ENCODE measurements at regions of chr5 and their contacts with region 1.

Region 1: GRCh38 chr5:112216140-112216539 is 202.9 kb downstream of the EPB41L4A start:
- DNase-seq: no peak
- ATAC-seq: no peak
- H3K4me3 ChIP-seq: no peak overlapping the region
- H3K27ac ChIP-seq: no peak overlapping the region
- H3K4me1 ChIP-seq: no peaks in the 10 kb centered on the region
- H3K27me3 ChIP-seq: no peaks in the 10 kb centered on the region; the same call in 1 of the 2 replicates
- CTCF ChIP-seq: no peak

Region 2: DNA sequence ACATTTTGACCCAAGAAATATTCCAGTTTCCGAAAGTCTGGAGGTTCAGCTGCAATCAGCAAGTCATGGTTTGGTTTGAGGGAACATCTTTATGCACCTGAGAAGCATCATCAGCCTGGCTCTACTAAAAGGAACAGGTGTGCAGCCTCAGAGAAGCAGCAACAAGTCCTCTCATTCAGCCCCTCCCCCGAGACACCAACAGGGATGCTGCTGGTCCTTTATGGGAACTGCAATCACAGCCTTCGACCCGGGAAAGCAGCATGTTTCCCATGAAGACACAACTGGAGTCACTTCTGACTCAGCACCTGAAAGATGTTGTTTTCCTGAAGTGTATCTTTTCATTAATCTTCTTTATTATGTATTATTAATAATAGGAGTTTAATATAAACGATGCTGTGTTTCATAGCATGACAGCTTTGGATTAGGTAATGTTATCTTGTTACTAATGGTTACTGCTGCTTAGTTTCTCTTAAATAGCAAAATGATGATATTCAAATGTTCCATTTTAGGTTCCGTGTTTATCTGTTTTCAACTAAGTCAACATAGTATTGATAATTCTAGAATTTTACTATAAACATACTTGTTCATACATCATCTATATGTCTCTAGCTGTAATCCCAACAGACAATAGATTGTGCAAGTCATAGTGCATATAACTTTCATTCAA is 443.6 kb before region 1 on chr5:
- CTCF ChIA-PET with region 1: no interaction called
- POLR2A ChIA-PET with region 1: no interaction called
- in situ Hi-C with region 1: no loop called
- intact Hi-C with region 1: no loop called
- DNase-seq: no peak
- ATAC-seq: no peak
- H3K4me3 ChIP-seq: no peak overlapping the region
- H3K27ac ChIP-seq: no peak overlapping the region
- H3K4me1 ChIP-seq: no peaks in the 10 kb centered on the region
- H3K27me3 ChIP-seq: no peaks in the 10 kb centered on the region
- CTCF ChIP-seq: no peak

Region 3: DNA sequence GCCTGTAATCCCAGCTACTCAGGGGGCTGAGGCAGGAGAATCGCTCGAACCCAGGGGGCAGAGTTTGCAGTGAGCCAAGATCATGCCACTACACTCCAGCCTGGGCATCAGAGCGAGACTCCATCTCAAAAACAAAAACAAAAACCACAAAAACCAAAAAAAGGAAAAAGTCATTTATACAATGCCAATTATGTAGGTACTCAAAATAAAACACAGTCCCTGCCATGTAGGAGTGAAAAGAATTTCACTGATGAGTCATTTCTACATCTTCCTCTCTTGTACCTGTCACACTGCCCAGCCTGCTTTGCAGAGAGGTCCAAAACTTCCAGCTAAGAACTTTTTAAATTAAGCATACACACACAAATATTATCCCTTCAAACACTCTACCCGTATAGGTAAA is 12.9 kb before region 1 on chr5:
- CTCF ChIA-PET with region 1: no interaction called
- POLR2A ChIA-PET with region 1: no interaction called
- in situ Hi-C with region 1: no loop called
- intact Hi-C with region 1: no loop called
- DNase-seq: no peak
- ATAC-seq: no peak
- H3K4me3 ChIP-seq: no peak overlapping the region
- H3K27ac ChIP-seq: no peak overlapping the region
- H3K4me1 ChIP-seq: no peaks in the 10 kb centered on the region
- H3K27me3 ChIP-seq: peaks cover 4% of the 10 kb centered on the region; the same call in 1 of the 2 replicates
- CTCF ChIP-seq: no peak

Region 4: GRCh38 chr5:112308608-112309007 is 92.5 kb after region 1 on chr5:
- CTCF ChIA-PET with region 1: no interaction called
- POLR2A ChIA-PET with region 1: no interaction called
- in situ Hi-C with region 1: no loop called
- intact Hi-C with region 1: no loop called
- DNase-seq: no peak
- ATAC-seq: no peak
- H3K4me3 ChIP-seq: no peak overlapping the region
- H3K27ac ChIP-seq: no peak overlapping the region
- H3K4me1 ChIP-seq: no peaks in the 10 kb centered on the region
- H3K27me3 ChIP-seq: no peaks in the 10 kb centered on the region
- CTCF ChIP-seq: no peak

Region 5: DNA sequence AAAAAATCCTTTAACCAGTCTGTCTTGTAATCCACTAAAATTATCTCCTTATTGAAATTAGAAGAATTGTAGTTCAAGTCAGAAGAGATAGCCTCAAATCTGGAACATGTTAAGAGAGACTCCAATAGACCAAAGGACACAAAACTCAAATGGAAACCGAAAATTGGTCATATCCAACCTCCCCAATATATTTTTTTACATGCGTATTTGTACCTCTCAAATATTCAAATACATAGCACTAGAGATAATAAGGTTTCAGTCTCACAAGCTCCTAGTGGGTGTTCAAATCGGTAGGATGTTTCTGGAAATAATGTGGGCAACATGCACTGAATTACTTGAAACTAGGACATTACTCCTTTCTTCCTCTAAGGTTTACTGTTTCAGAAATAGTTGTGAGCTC is 169.4 kb after region 1 on chr5:
- CTCF ChIA-PET with region 1: interaction called, 10 read pairs
- POLR2A ChIA-PET with region 1: no interaction called
- in situ Hi-C with region 1: no loop called
- intact Hi-C with region 1: no loop called
- DNase-seq: no peak
- ATAC-seq: no peak
- H3K4me3 ChIP-seq: no peak overlapping the region
- H3K27ac ChIP-seq: no peak overlapping the region
- H3K4me1 ChIP-seq: no peaks in the 10 kb centered on the region
- H3K27me3 ChIP-seq: peaks cover 2% of the 10 kb centered on the region; the same call in 1 of the 2 replicates
- CTCF ChIP-seq: no peak

Region 6: GRCh38 chr5:113320273-113320780 is 1104.2 kb after region 1 on chr5:
- CTCF ChIA-PET with region 1: no interaction called
- POLR2A ChIA-PET with region 1: no interaction called
- in situ Hi-C with region 1: no loop called
- intact Hi-C with region 1: no loop called
- DNase-seq: no peak
- ATAC-seq: no peak
- H3K4me3 ChIP-seq: no peak overlapping the region
- H3K27ac ChIP-seq: no peak overlapping the region
- H3K4me1 ChIP-seq: no peaks in the 10 kb centered on the region
- H3K27me3 ChIP-seq: no peaks in the 10 kb centered on the region
- CTCF ChIP-seq: no peak